GM13977 (cell line): ENCODE measurements at regions of chr2 and their contacts with region 1.

Region 1: GRCh38 chr2:240513549-240514287 is 44.1 kb downstream of the ANKMY1 start:
- DNase-seq: peak; percentile 97
- CTCF ChIP-seq: peak; percentile 97

Region 2: DNA sequence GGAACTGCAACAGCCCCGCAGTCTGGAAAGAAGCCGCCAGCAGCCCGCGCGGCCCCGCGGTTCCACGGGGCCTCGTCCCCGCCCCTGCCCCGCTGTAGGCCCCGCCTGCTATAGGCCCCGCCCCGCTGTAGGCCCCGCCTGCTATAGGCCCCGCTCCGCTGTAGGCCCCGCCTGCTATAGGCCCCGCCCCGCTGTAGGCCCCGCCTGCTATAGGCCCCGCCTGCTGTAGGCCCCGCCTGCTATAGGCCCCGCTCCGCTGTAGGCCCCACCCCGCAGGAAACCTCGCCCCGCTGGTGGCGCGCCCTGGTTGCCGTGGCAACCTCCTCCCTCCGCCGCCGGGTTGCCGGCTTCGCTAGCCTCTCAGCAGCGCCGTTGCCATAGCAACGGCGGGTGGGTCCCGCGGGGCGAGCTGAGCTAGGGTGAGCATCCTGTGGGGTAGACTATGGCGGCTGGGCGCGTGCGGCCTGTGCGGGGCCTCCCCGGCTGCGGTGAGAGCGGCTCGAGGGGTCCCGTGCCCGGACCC is 318.5 kb after region 1 on chr2:
- in situ Hi-C with region 1: loop called (anchors 25 kb)
- DNase-seq: peak; percentile 98
- CTCF ChIP-seq: no peak